Activated CD4-positive, alpha-beta T cell treated with anti-CD3 and anti-CD28 coated beads, Interleukin-2, amount 10 ng/mL, durations not matched to agents 24 days and 14 days (primary cell): ENCODE measurements at regions of chr5 and their contacts with region 1.

Region 1: DNA sequence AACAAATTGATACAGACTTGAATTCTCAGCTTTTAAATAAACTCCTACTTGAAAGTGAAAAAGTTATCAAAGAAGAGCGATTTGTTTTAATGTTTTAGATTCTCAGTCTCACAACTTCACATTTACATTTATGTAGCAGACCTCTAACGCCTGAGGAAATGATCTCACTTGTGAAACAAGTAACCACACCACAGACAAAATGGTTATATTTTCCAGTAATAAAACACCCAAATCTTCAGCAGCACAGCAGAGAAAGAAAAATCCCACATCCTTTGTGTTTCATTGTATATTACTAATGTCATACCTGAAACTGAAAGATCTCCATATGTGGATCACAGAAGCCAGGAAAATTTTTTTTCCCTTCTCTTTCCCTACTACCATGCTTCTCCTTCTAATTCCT is 29.8 kb upstream of the GZMA start:
- DNase-seq: peak; percentile 83
- H3K4me3 Mint-ChIP-seq: peak overlapping the region; percentile 65
- H3K27ac Mint-ChIP-seq: peak overlapping the region; percentile 87
- H3K4me1 Mint-ChIP-seq: peaks cover 41% of the 10 kb centered on the region
- H3K27me3 Mint-ChIP-seq: no peaks in the 10 kb centered on the region

Region 2: GRCh38 chr5:55027595-55027994 is 45.1 kb before region 1 on chr5:
- intact Hi-C with region 1: loop called (anchors 1 kb)
- DNase-seq: peak; percentile 90
- H3K4me3 Mint-ChIP-seq: peak overlapping the region; percentile 67
- H3K27ac Mint-ChIP-seq: peak overlapping the region; percentile 84
- H3K4me1 Mint-ChIP-seq: peaks cover 71% of the 10 kb centered on the region
- H3K27me3 Mint-ChIP-seq: no peaks in the 10 kb centered on the region

Region 3: DNA sequence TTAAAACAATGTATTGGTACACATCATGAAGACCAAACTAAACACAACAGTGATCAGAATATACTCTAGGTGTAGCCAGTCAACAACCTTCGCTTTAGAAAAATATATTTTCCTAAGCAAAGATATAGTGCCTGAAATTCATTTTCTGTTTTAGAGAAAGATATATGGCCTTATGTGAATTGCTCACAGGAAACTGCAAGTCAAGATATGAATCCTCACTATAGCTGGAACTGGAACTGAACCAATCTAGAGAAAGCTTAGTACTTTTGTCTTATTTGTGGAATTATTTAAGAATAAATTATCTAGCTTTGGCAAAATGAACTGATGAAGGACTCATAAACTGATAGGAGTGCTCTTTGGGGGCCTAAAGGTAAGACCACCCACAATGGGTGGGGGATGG is 21.3 kb before region 1 on chr5:
- intact Hi-C with region 1: no loop called
- DNase-seq: no peak
- H3K4me3 Mint-ChIP-seq: no peak overlapping the region
- H3K27ac Mint-ChIP-seq: no peak overlapping the region
- H3K4me1 Mint-ChIP-seq: peaks cover 20% of the 10 kb centered on the region
- H3K27me3 Mint-ChIP-seq: no peaks in the 10 kb centered on the region

Region 4: DNA sequence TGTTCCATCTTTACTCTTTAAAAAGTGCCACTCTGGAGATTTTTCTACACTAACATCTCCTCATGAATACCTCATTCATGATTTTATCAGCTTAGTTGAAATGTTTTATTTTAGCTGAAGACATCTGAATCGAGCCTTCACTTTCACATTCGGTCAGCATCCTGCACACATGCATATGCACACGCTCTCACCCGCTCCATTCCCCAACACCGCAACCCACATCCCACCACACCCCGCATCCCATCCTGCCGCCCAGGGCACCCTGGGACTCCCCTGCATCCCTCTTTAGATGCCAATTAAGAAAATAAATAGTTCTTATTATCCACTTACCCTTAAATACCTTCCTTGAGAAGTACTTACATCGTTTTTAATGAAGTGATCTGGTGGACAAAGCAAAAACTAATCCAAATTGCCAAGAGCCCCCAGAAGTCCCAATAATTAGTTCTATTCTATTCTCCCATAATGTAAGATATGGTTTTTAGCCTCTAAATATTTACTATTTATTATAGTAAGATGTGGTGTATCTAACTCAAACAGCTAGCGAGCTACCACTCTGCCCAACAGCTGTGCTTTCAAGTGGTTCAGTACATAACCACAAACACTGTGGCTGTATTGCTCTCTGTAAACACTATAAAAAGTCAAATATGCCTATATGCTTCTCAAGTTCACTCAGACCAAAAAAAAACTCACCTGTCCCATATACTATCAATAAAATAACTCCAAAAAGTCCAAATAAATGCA is 10.5 kb before region 1 on chr5:
- intact Hi-C with region 1: loop called (anchors 1 kb)
- DNase-seq: peak; percentile 94
- H3K4me3 Mint-ChIP-seq: peak overlapping the region; percentile 85
- H3K27ac Mint-ChIP-seq: peak overlapping the region; percentile 94
- H3K4me1 Mint-ChIP-seq: peaks cover 68% of the 10 kb centered on the region
- H3K27me3 Mint-ChIP-seq: no peaks in the 10 kb centered on the region

Region 5: GRCh38 chr5:55102348-55102747 is 29.7 kb after region 1 on chr5 and contains the start of gene GZMA:
- intact Hi-C with region 1: loop called (anchors 1 kb)
- DNase-seq: peak; percentile 86
- H3K4me3 Mint-ChIP-seq: peak within 1 kb of the TSS; percentile 80
- H3K27ac Mint-ChIP-seq: peak within 1 kb of the TSS; percentile 89
- H3K4me1 Mint-ChIP-seq: peaks cover 79% of the 10 kb centered on the region
- H3K27me3 Mint-ChIP-seq: peaks cover 1% of the 10 kb centered on the region
- total RNA-seq, gene GZMA: 87.6 and 91.2 TPM in 2 replicates

Region 6: GRCh38 chr5:55146543-55147151 is 74.0 kb after region 1 on chr5:
- intact Hi-C with region 1: loop called (anchors 2 kb)
- DNase-seq: peak; percentile 96
- H3K4me3 Mint-ChIP-seq: peak overlapping the region; percentile 53
- H3K27ac Mint-ChIP-seq: peak overlapping the region; percentile 62
- H3K4me1 Mint-ChIP-seq: peaks cover 32% of the 10 kb centered on the region
- H3K27me3 Mint-ChIP-seq: peaks cover 46% of the 10 kb centered on the region

Region 7: GRCh38 chr5:56290378-56291078 is 1217.9 kb after region 1 on chr5:
- intact Hi-C with region 1: no loop called
- DNase-seq: peak; percentile 59
- H3K4me3 Mint-ChIP-seq: no peak overlapping the region
- H3K27ac Mint-ChIP-seq: no peak overlapping the region
- H3K4me1 Mint-ChIP-seq: peaks cover 9% of the 10 kb centered on the region
- H3K27me3 Mint-ChIP-seq: no peaks in the 10 kb centered on the region